ENCODE measurements at regions of chr16 and their contacts with region 1.

Region 1: GRCh38 chr16:30370444-30371247 is at the start of gene TBC1D10B:
- DNase-seq: peak; percentile 90 to 100 (median 99)
- ATAC-seq: peak; percentile 81 to 87
- H3K4me3 Mint-ChIP-seq: peak within 1 kb of the TSS; percentile 79 to 92 (median 88)
- H3K27ac Mint-ChIP-seq: peak within 1 kb of the TSS; percentile 87 to 97 (median 93)
- H3K4me1 Mint-ChIP-seq: peaks cover 30 to 56% (median 49%) of the 10 kb centered on the region in 4 donors
- H3K27me3 Mint-ChIP-seq: no peaks in the 10 kb centered on the region
- polyA plus RNA-seq, gene TBC1D10B: 6.6 to 10.5 (median 7.3) TPM

Region 2: GRCh38 chr16:30335598-30336474 is 34.8 kb before region 1 on chr16:
- POLR2A ChIA-PET with region 1: interaction called, 10 read pairs
- DNase-seq: peak in 3 of 10 donors; percentile 23 to 72 (median 45)
- ATAC-seq: peak in 1 of 2 donors; percentile 22
- H3K4me3 Mint-ChIP-seq: peak overlapping the region; percentile 83 to 94 (median 86)
- H3K27ac Mint-ChIP-seq: peak overlapping the region in 9 of 10 donors; percentile 66 to 95 (median 90)
- H3K4me1 Mint-ChIP-seq: peaks cover 7 to 46% (median 31%) of the 10 kb centered on the region in 4 donors
- H3K27me3 Mint-ChIP-seq: no peaks in the 10 kb centered on the region

Region 3: GRCh38 chr16:30355144-30355894 is 15.3 kb before region 1 on chr16 and contains the start of gene CD2BP2:
- POLR2A ChIA-PET with region 1: interaction called, 48 read pairs
- DNase-seq: peak; percentile 79 to 93 (median 84)
- ATAC-seq: peak; percentile 92 to 94
- H3K4me3 Mint-ChIP-seq: peak within 1 kb of the TSS; percentile 89 to 99 (median 95)
- H3K27ac Mint-ChIP-seq: peak within 1 kb of the TSS; percentile 95 to 99 (median 98)
- H3K4me1 Mint-ChIP-seq: peaks cover 22 to 47% (median 37%) of the 10 kb centered on the region in 4 donors
- H3K27me3 Mint-ChIP-seq: no peaks in the 10 kb centered on the region
- polyA plus RNA-seq, gene CD2BP2: 20.6 to 21.9 (median 21.7) TPM

Region 4: GRCh38 chr16:30395155-30395991 is 24.7 kb after region 1 on chr16 and contains the start of gene ZNF48:
- POLR2A ChIA-PET with region 1: interaction called, 28 read pairs
- DNase-seq: peak in 9 of 10 donors; percentile 20 to 70 (median 56)
- ATAC-seq: peak; percentile 72
- H3K4me3 Mint-ChIP-seq: peak within 1 kb of the TSS; percentile 76 to 94 (median 86)
- H3K27ac Mint-ChIP-seq: peak within 1 kb of the TSS; percentile 69 to 94 (median 88)
- H3K4me1 Mint-ChIP-seq: peaks cover 21 to 49% (median 45%) of the 10 kb centered on the region in 4 donors
- H3K27me3 Mint-ChIP-seq: no peaks in the 10 kb centered on the region
- polyA plus RNA-seq, gene ZNF48: 6.1 to 11.7 (median 7.5) TPM

Region 5: DNA sequence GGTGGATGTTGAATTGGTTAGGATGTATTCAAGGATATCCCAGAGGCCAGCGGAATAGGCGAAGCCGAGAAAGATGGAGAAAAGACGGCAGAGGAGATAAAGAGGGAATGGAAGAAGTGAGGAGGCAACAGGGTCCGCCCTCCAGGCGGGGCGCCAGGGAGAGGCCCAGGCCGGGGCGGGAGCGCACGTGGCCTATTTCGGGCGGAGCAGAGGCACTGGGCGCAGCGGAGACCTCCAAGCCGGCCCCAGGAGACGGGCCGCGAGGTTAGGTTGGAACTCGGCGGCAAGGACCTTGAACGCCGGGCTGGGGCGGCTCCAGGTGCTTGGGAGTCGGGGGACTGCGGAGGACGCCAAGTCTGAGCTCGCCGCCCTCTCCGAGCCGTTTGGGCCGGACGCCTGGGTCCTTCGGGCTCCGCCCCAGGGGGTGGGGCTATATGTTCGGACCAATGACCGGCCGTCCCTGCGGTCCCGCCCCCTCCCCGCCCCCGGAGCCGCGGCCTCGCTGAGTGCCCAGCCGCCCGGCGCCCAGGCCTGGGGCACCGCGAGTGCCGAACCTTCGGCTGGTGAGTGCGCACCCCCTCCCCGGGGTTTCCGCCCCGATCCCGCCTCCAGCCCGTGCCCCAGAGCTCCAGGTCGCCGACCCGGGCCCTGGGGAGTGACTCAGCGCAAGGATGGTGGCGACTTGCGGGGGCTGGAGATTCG is 36.6 kb after region 1 on chr16 and contains the start of gene ZNF771:
- POLR2A ChIA-PET with region 1: interaction called, 52 read pairs
- DNase-seq: peak; percentile 65 to 92 (median 80)
- ATAC-seq: peak; percentile 81 to 87
- H3K4me3 Mint-ChIP-seq: peak within 1 kb of the TSS; percentile 88 to 100 (median 97)
- H3K27ac Mint-ChIP-seq: peak within 1 kb of the TSS; percentile 82 to 96 (median 95)
- H3K4me1 Mint-ChIP-seq: peaks cover 18 to 36% (median 29%) of the 10 kb centered on the region in 4 donors
- H3K27me3 Mint-ChIP-seq: peaks cover 0 to 3% (median 0%) of the 10 kb centered on the region in 5 donors
- polyA plus RNA-seq, gene ZNF771: 2.1 to 6.7 (median 3.8) TPM

Region 6: DNA sequence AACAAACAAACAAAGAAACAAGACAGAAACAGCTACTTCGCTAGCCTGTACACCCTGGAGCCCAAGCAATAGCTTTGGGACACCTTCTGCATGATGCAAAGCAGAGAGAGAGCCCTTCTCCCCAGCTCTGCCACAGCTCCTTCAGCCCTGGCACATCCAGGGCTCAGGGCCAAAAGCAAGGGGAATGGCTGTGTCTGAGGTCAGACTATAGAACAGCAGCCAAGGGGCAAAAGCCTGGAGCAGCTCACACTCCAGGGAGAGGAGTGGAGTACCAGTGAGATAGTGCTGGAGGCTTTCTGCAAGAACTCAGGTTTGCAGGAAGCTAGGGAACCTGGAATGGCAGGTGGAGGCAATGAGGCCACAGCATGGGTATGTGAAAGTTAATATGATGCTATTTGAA is 86.6 kb after region 1 on chr16:
- POLR2A ChIA-PET with region 1: no interaction called
- DNase-seq: no peak
- ATAC-seq: no peak
- H3K4me3 Mint-ChIP-seq: peak overlapping the region in 2 of 10 donors; percentile 21 to 43
- H3K27ac Mint-ChIP-seq: peak overlapping the region in 5 of 10 donors; percentile 25 to 84 (median 56)
- H3K4me1 Mint-ChIP-seq: peaks cover 21 to 57% (median 51%) of the 10 kb centered on the region in 4 donors
- H3K27me3 Mint-ChIP-seq: no peaks in the 10 kb centered on the region

Region 7: GRCh38 chr16:30499284-30499683 is 128.6 kb after region 1 on chr16:
- POLR2A ChIA-PET with region 1: no interaction called
- DNase-seq: no peak
- ATAC-seq: no peak
- H3K4me3 Mint-ChIP-seq: no peak overlapping the region
- H3K27ac Mint-ChIP-seq: peak overlapping the region in 2 of 10 donors; percentile 19 to 69
- H3K4me1 Mint-ChIP-seq: peaks cover 0 to 16% (median 6%) of the 10 kb centered on the region in 4 donors
- H3K27me3 Mint-ChIP-seq: no peaks in the 10 kb centered on the region

Region 8: DNA sequence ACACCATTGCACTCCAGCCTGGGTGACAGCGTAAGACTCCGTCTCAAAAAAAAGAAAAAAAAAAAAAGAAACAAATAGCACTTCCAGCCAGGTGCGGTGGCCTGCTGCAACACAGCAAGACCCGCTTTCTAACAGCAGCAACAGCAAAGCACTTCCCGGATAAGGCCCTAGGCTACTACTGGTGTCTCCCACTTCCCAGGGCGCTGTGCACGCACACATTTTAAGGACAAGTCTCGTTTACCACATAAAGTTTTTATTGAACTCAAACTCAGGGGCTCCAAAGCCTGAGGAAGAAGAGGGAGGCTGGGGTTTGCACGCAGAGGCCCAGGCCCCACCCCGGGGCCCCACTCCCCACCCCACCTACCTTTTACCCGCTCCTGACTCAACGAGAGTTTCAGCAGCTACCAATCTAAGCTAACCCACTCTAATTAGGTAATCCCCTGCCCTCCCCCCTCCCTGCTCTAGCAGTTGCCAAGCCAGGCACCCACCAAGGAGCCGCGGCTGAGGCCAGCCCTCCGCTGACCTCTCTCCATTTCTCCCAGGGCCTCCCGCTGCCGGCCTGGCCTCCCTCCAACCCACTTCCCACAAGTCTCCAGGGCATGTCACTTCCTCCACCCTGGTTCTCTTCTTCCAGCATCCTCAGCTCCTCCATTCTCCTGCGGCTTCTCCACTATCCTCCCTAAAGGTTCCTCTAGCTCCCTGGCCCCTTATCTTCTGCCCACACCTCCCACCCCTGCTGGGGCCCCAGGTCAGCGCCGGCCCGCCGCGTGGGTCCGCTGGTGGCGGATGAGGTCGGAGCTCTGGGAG is 153.3 kb after region 1 on chr16:
- POLR2A ChIA-PET with region 1: no interaction called
- DNase-seq: no peak
- ATAC-seq: no peak
- H3K4me3 Mint-ChIP-seq: peak overlapping the region in 4 of 10 donors; percentile 33 to 58 (median 44)
- H3K27ac Mint-ChIP-seq: peak overlapping the region in 4 of 10 donors; percentile 24 to 65 (median 46)
- H3K4me1 Mint-ChIP-seq: peaks cover 15 to 35% (median 27%) of the 10 kb centered on the region in 4 donors
- H3K27me3 Mint-ChIP-seq: no peaks in the 10 kb centered on the region

Region 9: DNA sequence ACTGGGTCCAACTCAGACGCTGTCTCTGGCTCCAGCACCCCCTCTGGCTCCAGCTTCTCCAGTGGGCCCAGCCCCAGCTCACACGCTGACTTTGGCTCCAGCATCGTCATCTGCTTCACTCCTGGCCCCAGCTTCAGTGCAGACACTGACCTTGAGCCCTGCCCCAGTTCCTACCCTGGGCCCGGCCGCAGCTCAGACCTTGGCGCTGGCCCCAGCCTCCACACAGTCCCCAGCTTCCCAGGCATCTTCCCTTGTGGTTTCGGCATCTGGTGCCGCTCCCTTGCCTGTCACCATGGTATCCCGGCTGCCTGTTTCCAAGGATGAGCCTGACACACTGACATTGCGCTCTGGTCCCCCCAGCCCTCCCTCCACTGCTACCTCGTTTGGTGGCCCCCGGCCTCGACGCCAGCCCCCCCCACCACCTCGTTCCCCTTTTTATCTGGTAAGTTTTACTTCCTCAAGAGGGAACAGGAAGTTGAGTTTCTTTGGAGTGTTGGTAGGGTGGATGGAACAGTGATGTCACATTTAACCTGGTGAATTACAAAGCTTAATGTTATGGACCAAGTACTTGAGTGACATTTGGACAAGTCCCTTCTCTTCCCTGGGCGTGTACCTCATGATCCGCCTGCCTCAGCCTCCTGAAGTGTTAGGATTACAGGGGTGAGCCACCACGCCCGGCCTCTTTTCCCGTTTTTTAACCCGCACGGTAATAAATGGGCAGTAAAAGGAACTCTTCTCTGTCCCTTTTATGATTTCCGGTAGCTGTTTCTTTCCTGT is 354.2 kb after region 1 on chr16:
- POLR2A ChIA-PET with region 1: no interaction called
- DNase-seq: no peak
- ATAC-seq: no peak
- H3K4me3 Mint-ChIP-seq: no peak overlapping the region
- H3K27ac Mint-ChIP-seq: peak overlapping the region in 6 of 10 donors; percentile 28 to 76 (median 56)
- H3K4me1 Mint-ChIP-seq: peaks cover 13 to 36% (median 25%) of the 10 kb centered on the region in 4 donors
- H3K27me3 Mint-ChIP-seq: no peaks in the 10 kb centered on the region